ENCODE measurements at regions of chr10 and their contacts with region 1.

Region 1: DNA sequence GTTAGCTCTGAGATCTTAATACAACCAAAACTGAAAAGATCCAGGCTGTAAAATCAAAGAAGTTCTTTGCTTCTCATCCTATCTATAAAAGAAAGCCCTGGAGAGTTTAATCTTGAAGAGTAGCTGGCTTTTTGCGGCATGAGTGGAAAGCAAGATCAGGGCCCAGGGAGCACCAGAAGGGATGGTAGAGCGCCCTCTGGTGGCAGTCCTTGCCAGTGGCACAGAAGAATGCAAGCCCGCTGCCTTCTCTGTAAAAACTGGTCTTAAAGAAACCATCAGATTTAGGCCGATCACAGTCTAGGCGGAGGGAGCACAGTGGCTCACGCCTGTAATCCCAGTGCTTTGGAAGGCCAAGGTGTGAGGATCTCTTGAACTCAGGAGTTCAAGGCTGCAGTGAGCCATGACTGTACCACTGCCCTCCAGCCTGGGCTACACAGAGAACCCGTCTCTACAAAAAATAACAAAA is 35.6 kb downstream of the CPN1 start:
- DNase-seq: peak; percentile 87
- ATAC-seq: peak; percentile 82
- H3K4me3 Mint-ChIP-seq: no peak overlapping the region
- H3K27ac Mint-ChIP-seq: no peak overlapping the region
- H3K4me1 Mint-ChIP-seq: no peaks in the 10 kb centered on the region
- H3K27me3 Mint-ChIP-seq: peaks cover 17% of the 10 kb centered on the region

Region 2: DNA sequence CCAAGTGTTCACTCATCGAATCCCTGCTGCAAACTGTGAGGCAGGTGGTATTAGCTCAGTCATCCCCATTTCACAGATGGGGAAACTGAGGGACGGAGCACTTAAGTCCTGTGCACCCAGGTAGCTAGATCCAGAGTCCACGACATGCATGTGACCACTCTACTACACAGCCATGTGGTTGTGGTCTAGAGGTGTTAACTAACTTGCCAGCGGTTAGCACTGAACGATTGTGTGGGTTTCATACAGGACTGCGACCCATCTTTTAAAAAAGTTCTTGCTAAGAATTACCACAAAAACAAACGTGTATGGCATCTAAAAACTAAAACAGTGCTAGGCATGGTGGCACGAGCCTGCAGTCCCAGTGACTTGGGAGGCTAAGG is 279.8 kb before region 1 on chr10:
- CTCF ChIA-PET with region 1: no interaction called
- POLR2A ChIA-PET with region 1: no interaction called
- DNase-seq: peak; percentile 24
- ATAC-seq: peak; percentile 19
- H3K4me3 Mint-ChIP-seq: no peak overlapping the region
- H3K27ac Mint-ChIP-seq: no peak overlapping the region
- H3K4me1 Mint-ChIP-seq: peaks cover 6% of the 10 kb centered on the region
- H3K27me3 Mint-ChIP-seq: no peaks in the 10 kb centered on the region

Region 3: DNA sequence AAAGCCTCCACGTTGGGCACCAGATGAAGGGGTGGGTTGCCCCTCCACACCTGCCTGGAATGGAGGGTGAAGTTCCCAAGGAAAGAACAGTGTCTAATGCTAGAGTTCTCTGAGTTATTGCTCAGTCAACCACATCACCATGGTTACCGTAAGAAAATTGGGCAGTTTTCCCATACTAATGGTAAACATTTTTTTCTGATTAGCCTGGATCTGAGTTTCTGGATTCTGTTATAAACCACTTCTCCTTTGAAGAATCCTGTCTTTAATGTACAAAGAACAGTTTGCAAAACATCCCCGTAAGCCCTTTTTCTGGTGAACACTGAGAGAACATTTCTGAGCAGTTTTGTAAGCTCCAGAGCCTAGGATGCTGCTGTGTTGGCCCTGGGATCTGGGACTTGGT is 218.1 kb before region 1 on chr10:
- CTCF ChIA-PET with region 1: interaction called, 10 read pairs
- POLR2A ChIA-PET with region 1: no interaction called
- DNase-seq: no peak
- ATAC-seq: no peak
- H3K4me3 Mint-ChIP-seq: no peak overlapping the region
- H3K27ac Mint-ChIP-seq: no peak overlapping the region
- H3K4me1 Mint-ChIP-seq: peaks cover 13% of the 10 kb centered on the region
- H3K27me3 Mint-ChIP-seq: no peaks in the 10 kb centered on the region

Region 4: GRCh38 chr10:99854860-99855259 is 191.2 kb before region 1 on chr10:
- CTCF ChIA-PET with region 1: interaction called, 226 read pairs
- POLR2A ChIA-PET with region 1: no interaction called
- DNase-seq: no peak
- ATAC-seq: no peak
- H3K4me3 Mint-ChIP-seq: no peak overlapping the region
- H3K27ac Mint-ChIP-seq: no peak overlapping the region
- H3K4me1 Mint-ChIP-seq: no peaks in the 10 kb centered on the region
- H3K27me3 Mint-ChIP-seq: peaks cover 7% of the 10 kb centered on the region

Region 5: DNA sequence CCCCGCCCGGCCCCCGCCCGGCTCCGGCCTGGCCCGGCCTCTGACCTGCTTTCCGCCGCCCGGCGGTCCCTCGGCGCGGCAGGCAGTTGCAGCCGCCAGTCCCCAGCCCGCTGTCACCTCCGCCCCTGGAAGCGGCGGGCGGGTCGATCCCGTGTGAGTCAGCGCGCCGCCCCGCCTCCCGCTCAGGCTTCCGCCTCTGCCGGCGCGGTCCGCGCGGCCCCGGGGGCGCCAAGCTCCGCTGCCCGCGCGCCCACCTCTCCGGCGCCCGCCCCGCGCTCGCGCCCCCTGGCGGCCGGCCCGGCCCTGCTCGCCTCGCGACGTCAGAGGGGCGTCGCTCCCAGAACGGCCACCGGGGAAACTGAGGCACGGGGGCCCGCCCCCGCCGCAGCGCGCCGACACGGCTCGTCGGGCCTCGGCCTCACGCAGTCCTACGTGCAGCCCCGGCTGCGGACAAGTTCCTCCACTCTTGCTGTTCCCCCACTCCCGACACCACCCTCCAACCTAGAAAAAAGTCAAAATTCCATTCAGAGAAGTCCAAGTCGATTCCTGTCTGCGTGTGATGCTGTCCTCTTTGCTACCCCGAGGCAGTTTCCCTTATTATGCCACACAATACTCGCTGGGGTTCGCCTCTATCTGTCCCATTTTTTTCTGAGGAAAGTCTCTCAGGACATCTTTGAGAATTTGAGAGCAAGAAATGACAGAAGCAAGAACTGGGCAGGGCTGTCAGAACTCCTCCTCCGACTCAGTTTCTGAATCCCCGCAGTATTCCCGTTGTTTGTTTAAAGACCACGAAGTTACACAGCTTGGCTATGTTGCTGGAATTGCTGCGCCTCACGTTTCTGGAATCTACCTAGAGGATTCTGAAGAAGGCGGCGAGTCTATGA is 36.0 kb before region 1 on chr10 and contains the start of gene DNMBP:
- CTCF ChIA-PET with region 1: interaction called, 22 read pairs
- POLR2A ChIA-PET with region 1: no interaction called
- DNase-seq: peak; percentile 85
- ATAC-seq: peak; percentile 98
- H3K4me3 Mint-ChIP-seq: peak within 1 kb of the TSS; percentile 86
- H3K27ac Mint-ChIP-seq: peak within 1 kb of the TSS; percentile 77
- H3K4me1 Mint-ChIP-seq: peaks cover 37% of the 10 kb centered on the region
- H3K27me3 Mint-ChIP-seq: peaks cover 36% of the 10 kb centered on the region
- total RNA-seq, gene DNMBP: 4.1 to 4.4 TPM

Region 6: DNA sequence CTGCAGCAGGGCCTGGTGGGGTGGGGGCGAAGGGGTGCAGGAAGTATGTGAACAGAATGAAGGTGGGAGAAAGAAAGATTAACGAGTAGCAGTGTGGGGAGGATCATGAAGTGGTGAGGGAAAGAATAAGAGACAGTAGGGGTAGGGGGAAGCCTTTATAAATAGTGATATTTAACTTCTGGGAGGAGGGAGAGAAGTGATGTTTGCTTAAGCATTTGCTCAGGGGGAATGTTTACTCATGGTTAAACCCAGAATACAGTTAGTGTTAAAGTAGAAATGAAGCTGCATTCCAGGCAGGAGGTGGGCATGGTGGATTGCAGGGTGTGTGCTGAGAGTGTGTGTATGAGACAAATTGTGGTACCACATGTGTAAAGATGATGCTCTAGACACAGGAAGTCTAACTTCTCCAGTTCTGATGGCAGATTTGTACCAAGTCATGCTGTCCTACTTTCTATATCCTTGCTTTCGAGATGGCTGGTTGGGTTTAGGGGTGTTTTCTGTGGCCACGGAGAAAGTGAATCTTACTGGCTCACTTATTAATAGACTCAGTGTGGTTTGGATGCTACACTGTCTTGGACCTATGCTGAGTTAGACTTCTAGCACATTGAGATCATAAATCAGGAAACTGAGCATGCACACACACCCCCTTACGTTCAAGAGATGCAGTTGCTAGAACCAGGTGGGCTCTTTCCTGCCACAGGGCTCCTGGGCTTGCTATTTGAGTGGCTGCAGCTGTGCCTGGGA is 25.7 kb before region 1 on chr10:
- CTCF ChIA-PET with region 1: interaction called, 11 read pairs
- POLR2A ChIA-PET with region 1: no interaction called
- DNase-seq: peak; percentile 29
- ATAC-seq: peak; percentile 68
- H3K4me3 Mint-ChIP-seq: no peak overlapping the region
- H3K27ac Mint-ChIP-seq: no peak overlapping the region
- H3K4me1 Mint-ChIP-seq: peaks cover 15% of the 10 kb centered on the region
- H3K27me3 Mint-ChIP-seq: peaks cover 10% of the 10 kb centered on the region

Region 7: GRCh38 chr10:100057948-100058347 is 11.9 kb after region 1 on chr10:
- CTCF ChIA-PET with region 1: interaction called, 15 read pairs
- POLR2A ChIA-PET with region 1: no interaction called
- DNase-seq: no peak
- ATAC-seq: no peak
- H3K4me3 Mint-ChIP-seq: no peak overlapping the region
- H3K27ac Mint-ChIP-seq: no peak overlapping the region
- H3K4me1 Mint-ChIP-seq: no peaks in the 10 kb centered on the region
- H3K27me3 Mint-ChIP-seq: peaks cover 28% of the 10 kb centered on the region

Measured in activated CD8-positive, alpha-beta T cell treated with anti-CD3 and anti-CD28 coated beads, Interleukin-2, amount 10 ng/mL, durations not matched to agents 7 days and 5 days (primary cell).